Posterior cingulate gyrus (tissue), 11 donors: ENCODE measurements at regions of chr10 and their contacts with region 1.

Region 1: GRCh38 chr10:102743588-102744373 is at the start of gene WBP1L:
- DNase-seq: peak; percentile 91 to 99 (median 94)

Region 2: DNA sequence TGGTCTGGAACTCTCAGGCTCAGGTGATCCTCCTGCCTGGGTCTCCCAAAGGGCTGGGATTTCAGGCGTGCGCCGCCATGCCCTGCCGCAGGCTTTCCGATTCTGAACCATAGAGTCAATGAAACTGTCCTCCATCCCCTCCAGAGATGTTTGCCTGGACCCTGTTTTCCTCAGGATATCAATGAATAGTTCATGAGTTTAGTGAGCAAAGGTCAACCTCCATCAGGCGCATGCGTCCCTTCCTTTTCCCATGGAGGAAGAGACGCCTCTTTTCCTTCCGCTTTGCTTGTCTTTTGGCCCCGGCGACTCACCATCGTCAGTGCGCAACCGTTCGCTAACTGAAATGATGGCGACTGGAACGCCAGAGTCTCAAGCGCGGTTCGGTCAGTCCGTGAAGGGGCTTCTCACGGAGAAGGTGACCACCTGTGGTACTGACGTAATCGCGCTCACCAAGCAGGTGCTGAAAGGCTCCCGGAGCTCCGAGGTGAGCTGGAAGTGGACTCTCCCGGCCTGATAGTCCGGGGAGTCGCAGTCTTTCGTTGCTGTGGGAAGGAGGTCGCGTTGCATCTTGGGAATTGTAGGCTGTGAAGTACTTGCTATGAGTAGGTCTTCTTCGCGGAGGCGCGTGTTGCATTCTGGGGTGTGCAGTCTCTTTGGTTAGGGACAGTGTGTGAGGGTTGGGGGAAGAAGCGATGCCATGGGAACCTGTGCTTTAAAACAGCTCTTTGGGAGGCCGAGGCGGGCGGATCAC is 110.3 kb after region 1 on chr10 and contains the start of gene BORCS7:
- intact Hi-C with region 1: loop called (anchors 1 kb)
- DNase-seq: peak; percentile 91 to 99 (median 94)

Region 3: GRCh38 chr10:102876747-102877153 is 133.0 kb after region 1 on chr10:
- intact Hi-C with region 1: no loop called
- DNase-seq: no peak